Caco-2 (cell line): ENCODE measurements at regions of chr13 and their contacts with region 1.

Region 1: GRCh38 chr13:20940083-20940880 is 37.7 kb upstream of the XPO4 start:
- DNase-seq: peak; percentile 70 to 72
- H3K4me3 ChIP-seq: no peak overlapping the region
- H3K4me3 Mint-ChIP-seq: peak overlapping the region; percentile 73
- H3K27ac Mint-ChIP-seq: peak overlapping the region; percentile 97
- H3K4me1 ChIP-seq: peaks cover 36% of the 10 kb centered on the region
- H3K4me1 Mint-ChIP-seq: peaks cover 46% of the 10 kb centered on the region
- H3K27me3 ChIP-seq: no peaks in the 10 kb centered on the region
- H3K27me3 Mint-ChIP-seq: no peaks in the 10 kb centered on the region
- CTCF ChIP-seq: no peak

Region 2: DNA sequence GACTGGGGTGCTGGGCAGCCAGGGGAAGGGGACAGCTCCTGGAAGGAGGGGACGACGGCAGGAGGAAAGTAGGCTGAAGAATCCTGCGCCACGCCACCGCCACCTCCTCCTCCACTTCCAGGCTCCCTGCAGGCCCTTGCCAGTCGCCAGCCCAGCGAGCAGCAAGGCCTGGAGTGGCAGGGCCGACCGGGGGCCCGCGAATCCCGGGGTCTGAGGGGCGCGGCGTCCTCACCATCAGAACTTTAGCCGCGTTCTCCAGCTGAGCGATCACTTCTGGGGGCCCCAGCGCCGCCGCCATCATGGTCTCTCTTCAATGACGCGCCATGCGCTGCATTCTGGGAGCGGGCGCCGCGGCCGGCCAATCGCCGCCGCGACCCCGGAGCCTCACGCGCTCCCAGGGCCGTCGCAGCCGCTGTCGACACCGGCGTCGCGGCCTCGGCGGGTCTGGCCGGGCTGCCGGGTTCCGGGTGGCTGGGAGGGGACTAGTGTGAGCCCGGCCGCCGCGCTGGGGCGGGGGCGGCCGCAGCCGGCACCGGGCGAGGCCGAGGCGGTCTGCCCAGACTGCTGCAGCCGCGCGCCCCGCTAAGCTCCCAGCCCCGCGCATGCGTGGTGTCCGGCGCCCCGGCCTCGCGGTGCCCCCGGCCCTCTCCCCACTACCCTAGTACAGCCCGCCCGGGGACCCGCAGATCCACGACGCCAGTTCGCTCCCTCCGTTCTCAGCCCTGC is 37.7 kb before region 1 on chr13 and contains the start of gene XPO4:
- CTCF ChIA-PET with region 1: interaction called, 4 read pairs
- POLR2A ChIA-PET with region 1: interaction called, 13 read pairs
- intact Hi-C with region 1: no loop called
- DNase-seq: peak; percentile 87 to 93
- H3K4me3 ChIP-seq: peak within 1 kb of the TSS; percentile 93
- H3K4me3 Mint-ChIP-seq: peak within 1 kb of the TSS; percentile 99
- H3K27ac Mint-ChIP-seq: peak within 1 kb of the TSS; percentile 99
- H3K4me1 ChIP-seq: peaks cover 5% of the 10 kb centered on the region; the same call in 1 of the 2 replicates
- H3K4me1 Mint-ChIP-seq: peaks cover 7% of the 10 kb centered on the region
- H3K27me3 ChIP-seq: no peaks in the 10 kb centered on the region
- H3K27me3 Mint-ChIP-seq: no peaks in the 10 kb centered on the region
- CTCF ChIP-seq: no peak
- total RNA-seq, gene XPO4: 31.3 and 33.3 TPM in 2 replicates

Region 3: DNA sequence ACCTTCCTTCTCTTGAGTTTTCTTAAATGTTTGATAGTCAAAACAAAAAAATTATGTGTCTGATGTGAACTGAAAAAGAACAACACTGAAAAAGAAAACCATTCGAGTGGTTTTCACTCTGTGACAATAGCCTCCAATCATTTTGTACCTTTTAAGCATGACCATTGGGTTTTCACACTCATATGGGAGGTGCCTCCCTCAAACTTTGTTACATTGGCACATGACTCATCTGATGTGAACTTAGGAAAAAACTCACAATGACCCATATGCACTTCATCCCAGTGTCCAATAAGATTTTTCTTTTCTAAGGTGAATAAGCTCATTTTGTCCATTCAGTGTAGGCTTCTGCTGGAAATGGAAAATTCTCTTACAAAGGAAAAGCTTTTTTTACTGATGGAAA is 28.9 kb after region 1 on chr13:
- CTCF ChIA-PET with region 1: interaction called, 5 read pairs
- POLR2A ChIA-PET with region 1: no interaction called
- intact Hi-C with region 1: loop called (anchors 2 kb)
- DNase-seq: no peak
- H3K4me3 ChIP-seq: no peak overlapping the region
- H3K4me3 Mint-ChIP-seq: no peak overlapping the region
- H3K27ac Mint-ChIP-seq: peak overlapping the region; percentile 20
- H3K4me1 ChIP-seq: peaks cover 22% of the 10 kb centered on the region
- H3K4me1 Mint-ChIP-seq: peaks cover 23% of the 10 kb centered on the region
- H3K27me3 ChIP-seq: no peaks in the 10 kb centered on the region
- H3K27me3 Mint-ChIP-seq: no peaks in the 10 kb centered on the region
- CTCF ChIP-seq: no peak

Region 4: GRCh38 chr13:21106089-21106488 is 165.8 kb after region 1 on chr13:
- CTCF ChIA-PET with region 1: no interaction called
- POLR2A ChIA-PET with region 1: no interaction called
- intact Hi-C with region 1: loop called (anchors 1 kb)
- DNase-seq: no peak
- H3K4me3 ChIP-seq: no peak overlapping the region
- H3K4me3 Mint-ChIP-seq: no peak overlapping the region
- H3K27ac Mint-ChIP-seq: no peak overlapping the region
- H3K4me1 ChIP-seq: no peaks in the 10 kb centered on the region
- H3K4me1 Mint-ChIP-seq: no peaks in the 10 kb centered on the region
- H3K27me3 ChIP-seq: no peaks in the 10 kb centered on the region
- H3K27me3 Mint-ChIP-seq: no peaks in the 10 kb centered on the region
- CTCF ChIP-seq: no peak

Region 5: GRCh38 chr13:21176220-21176982 is 236.1 kb after region 1 on chr13 and contains the starts of genes MRPL57 and SKA3:
- CTCF ChIA-PET with region 1: interaction called, 3 read pairs
- POLR2A ChIA-PET with region 1: interaction called, 8 read pairs
- intact Hi-C with region 1: loop called (anchors 1 kb)
- DNase-seq: peak; percentile 95 to 98
- H3K4me3 ChIP-seq: peak within 1 kb of the TSS; percentile 82
- H3K4me3 Mint-ChIP-seq: peak within 1 kb of the TSS; percentile 87
- H3K27ac Mint-ChIP-seq: peak within 1 kb of the TSS; percentile 96
- H3K4me1 ChIP-seq: peaks cover 12% of the 10 kb centered on the region; the same call in 1 of the 2 replicates
- H3K4me1 Mint-ChIP-seq: peaks cover 7% of the 10 kb centered on the region
- H3K27me3 ChIP-seq: no peaks in the 10 kb centered on the region
- H3K27me3 Mint-ChIP-seq: no peaks in the 10 kb centered on the region
- CTCF ChIP-seq: no peak
- total RNA-seq, gene MRPL57: 32.8 and 33.9 TPM in 2 replicates
- total RNA-seq, gene SKA3: 33.3 and 37.5 TPM in 2 replicates